ENCODE measurements at regions of chr16 and their contacts with region 1.

Region 1: DNA sequence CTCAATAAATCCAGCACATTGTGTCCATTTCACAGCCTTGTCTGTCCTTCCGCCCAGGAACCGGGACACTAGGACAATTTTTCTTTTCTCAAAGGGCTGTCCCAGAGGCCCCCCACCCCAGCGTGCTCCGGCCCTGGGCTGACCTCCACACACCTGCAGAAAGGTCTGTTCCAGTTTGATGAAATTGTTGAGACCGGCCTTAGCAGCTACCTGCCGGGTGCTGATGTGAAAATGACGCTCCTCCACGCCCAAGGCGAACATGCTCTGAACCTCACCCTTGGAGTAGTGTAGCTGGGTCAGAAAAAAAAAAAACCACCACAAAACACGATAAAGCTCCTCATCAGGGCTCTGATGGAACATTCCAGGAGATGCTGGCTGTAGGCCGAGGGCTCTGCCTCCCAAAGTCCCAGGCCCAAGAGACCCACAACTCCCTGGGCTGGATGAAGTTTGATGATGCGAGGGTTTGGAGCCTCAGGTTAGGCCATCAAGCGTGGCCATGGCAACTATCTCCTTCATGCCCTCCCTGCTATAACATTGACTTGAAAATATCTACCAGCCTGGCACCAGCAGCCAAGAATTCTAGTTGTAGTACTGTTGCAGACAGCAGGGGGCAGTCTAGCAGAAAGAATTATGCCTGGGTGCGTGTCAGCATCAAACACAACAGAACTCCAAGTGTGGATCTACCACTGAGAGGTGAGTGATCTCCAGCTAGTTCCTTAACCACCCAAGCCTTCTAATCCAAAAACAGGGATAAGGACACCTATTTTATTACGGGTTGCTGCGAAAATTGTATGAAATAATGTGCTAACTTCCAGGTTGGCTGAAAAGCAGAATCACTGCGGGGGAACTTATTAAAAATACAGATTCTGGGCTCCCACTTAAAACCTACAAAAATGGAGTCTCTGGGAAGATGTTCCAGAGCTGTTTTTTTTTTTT is 62.1 kb downstream of the RMI2 start:
- DNase-seq: peak; percentile 81
- H3K4me3 Mint-ChIP-seq: no peak overlapping the region
- H3K27ac Mint-ChIP-seq: no peak overlapping the region
- H3K4me1 Mint-ChIP-seq: no peaks in the 10 kb centered on the region
- H3K27me3 Mint-ChIP-seq: peaks cover 11% of the 10 kb centered on the region
- CTCF ChIP-seq: peak; percentile 72

Region 2: GRCh38 chr16:10964039-10964890 is 443.1 kb before region 1 on chr16:
- CTCF ChIA-PET with region 1: interaction called, 20 read pairs
- POLR2A ChIA-PET with region 1: no interaction called
- intact Hi-C with region 1: no loop called
- DNase-seq: peak; percentile 79
- H3K4me3 Mint-ChIP-seq: no peak overlapping the region
- H3K27ac Mint-ChIP-seq: no peak overlapping the region
- H3K4me1 Mint-ChIP-seq: peaks cover 18% of the 10 kb centered on the region
- H3K27me3 Mint-ChIP-seq: no peaks in the 10 kb centered on the region
- CTCF ChIP-seq: peak; percentile 93

Region 3: GRCh38 chr16:11370084-11370931 is 37.0 kb before region 1 on chr16:
- CTCF ChIA-PET with region 1: no interaction called
- POLR2A ChIA-PET with region 1: no interaction called
- intact Hi-C with region 1: no loop called
- DNase-seq: no peak
- H3K4me3 Mint-ChIP-seq: no peak overlapping the region
- H3K27ac Mint-ChIP-seq: no peak overlapping the region
- H3K4me1 Mint-ChIP-seq: peaks cover 10% of the 10 kb centered on the region
- H3K27me3 Mint-ChIP-seq: no peaks in the 10 kb centered on the region
- CTCF ChIP-seq: no peak

Region 4: DNA sequence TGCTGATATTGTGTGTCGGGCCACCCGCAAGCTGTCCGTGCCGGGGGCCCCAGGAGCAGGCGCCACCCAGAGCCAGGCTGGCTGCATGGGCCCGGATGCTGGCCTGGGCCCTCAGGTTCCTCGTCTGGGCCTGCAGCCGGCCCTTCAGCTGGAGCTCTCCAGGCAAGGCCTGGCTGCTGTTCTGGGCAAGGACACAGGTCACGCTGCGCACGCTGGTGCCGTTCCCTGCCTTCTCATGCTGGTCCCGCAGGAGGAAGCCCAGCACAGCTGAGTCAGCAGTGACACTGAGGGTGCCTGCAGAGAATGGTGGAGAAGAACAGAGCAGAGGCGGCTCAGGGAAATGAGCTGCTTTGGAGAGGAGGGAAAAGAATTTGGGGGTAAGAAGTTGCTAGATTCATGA is 17.8 kb after region 1 on chr16:
- CTCF ChIA-PET with region 1: interaction called, 14 read pairs
- POLR2A ChIA-PET with region 1: no interaction called
- intact Hi-C with region 1: no loop called
- DNase-seq: no peak
- H3K4me3 Mint-ChIP-seq: no peak overlapping the region
- H3K27ac Mint-ChIP-seq: no peak overlapping the region
- H3K4me1 Mint-ChIP-seq: no peaks in the 10 kb centered on the region
- H3K27me3 Mint-ChIP-seq: no peaks in the 10 kb centered on the region
- CTCF ChIP-seq: no peak

Region 5: DNA sequence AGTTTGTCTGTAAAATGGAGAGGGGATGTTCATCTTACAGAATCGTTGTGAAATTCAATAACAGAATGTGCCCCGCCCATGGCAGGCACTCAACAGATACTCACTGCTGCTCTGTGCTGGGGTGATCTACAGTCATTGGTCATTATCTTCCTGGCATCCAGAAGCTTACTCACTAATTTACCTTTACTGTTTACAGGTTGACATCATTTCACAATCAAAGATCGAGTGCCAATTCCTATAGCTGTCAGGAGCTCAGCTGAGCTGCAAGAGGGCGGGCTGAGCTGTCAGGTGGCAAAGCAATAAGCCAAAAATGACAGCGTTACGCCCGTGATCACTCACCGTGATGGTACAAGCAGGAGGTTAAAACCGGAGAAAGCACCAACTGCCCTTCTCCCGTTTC is 128.2 kb after region 1 on chr16:
- CTCF ChIA-PET with region 1: interaction called, 36 read pairs
- POLR2A ChIA-PET with region 1: interaction called, 6 read pairs
- intact Hi-C with region 1: loop called (anchors 5 kb)
- DNase-seq: peak; percentile 91
- H3K4me3 Mint-ChIP-seq: no peak overlapping the region
- H3K27ac Mint-ChIP-seq: no peak overlapping the region
- H3K4me1 Mint-ChIP-seq: peaks cover 17% of the 10 kb centered on the region
- H3K27me3 Mint-ChIP-seq: no peaks in the 10 kb centered on the region
- CTCF ChIP-seq: no peak

Region 6: DNA sequence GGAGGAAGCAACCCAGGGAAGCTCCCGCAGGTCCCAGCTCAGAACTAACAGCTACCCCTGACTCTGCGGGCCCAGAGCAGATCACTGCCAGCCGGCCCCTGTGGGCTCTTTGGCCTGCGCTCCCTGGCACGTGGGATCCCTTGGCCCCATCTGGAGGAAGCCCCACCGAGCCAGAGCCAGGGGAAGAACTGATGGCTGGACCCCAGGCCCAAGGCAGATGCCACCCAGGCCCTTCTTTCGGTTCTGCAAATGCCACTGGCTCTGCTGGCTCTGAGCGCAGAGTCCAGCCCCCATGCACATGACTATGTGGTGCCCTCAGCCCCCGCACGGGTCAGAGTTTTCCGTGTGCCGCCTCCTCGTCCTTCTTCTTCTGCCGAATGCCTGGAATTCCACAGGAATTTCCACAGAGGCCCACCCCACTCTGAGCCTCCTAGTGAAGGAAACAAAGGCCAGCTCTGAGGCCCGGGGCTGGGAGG is 225.2 kb after region 1 on chr16:
- CTCF ChIA-PET with region 1: interaction called, 4 read pairs
- POLR2A ChIA-PET with region 1: interaction called, 3 read pairs
- intact Hi-C with region 1: loop called (anchors 5 kb)
- DNase-seq: no peak
- H3K4me3 Mint-ChIP-seq: no peak overlapping the region
- H3K27ac Mint-ChIP-seq: no peak overlapping the region
- H3K4me1 Mint-ChIP-seq: peaks cover 20% of the 10 kb centered on the region
- H3K27me3 Mint-ChIP-seq: no peaks in the 10 kb centered on the region
- CTCF ChIP-seq: no peak

Region 7: DNA sequence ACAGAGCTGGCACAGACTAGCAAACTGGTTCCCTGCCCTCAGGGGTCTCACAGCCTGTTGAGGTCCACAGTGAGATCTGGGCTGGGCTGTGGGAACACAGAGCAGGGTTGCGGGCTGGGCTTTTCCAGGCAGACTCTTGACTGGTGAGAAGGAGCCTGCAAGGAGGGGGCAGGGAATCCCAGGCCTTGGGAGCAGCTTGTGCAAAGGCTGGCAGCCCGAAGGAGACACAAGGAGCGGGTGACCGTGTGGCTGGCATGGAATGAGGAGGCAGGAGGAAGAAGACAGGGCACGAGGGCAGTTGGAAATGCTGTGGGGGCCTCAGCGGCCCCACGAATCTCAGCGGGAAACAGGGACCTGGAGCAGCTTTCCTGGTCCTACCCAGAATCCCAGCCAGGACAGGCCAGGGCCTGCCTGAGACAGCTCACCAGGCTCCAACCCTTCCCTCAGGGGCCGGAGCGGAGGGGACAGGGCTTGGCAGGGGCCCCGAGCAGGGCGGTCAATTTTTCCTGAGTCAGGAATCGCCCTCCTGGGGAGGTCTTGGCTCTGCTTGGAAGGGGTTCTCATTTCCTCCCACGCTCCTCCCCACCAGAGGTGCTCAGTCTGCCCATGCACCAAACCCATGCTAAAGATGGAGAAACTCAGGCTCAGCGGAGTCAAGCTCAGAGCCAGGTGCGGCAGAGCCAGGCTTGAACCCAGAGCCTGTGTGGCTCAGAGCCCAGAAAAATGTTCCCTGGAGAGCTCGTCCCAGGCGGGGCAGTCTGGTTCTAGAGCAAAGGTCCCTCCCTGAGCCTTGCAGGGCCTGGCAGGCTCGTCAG is 251.8 kb after region 1 on chr16:
- CTCF ChIA-PET with region 1: interaction called, 18 read pairs
- POLR2A ChIA-PET with region 1: interaction called, 3 read pairs
- intact Hi-C with region 1: no loop called
- DNase-seq: peak; percentile 97
- H3K4me3 Mint-ChIP-seq: peak overlapping the region; percentile 37
- H3K27ac Mint-ChIP-seq: peak overlapping the region; percentile 94
- H3K4me1 Mint-ChIP-seq: peaks cover 18% of the 10 kb centered on the region
- H3K27me3 Mint-ChIP-seq: no peaks in the 10 kb centered on the region
- CTCF ChIP-seq: no peak

Region 8: GRCh38 chr16:11715246-11715947 is 308.1 kb after region 1 on chr16:
- CTCF ChIA-PET with region 1: interaction called, 79 read pairs
- POLR2A ChIA-PET with region 1: interaction called, 3 read pairs
- intact Hi-C with region 1: no loop called
- DNase-seq: no peak
- H3K4me3 Mint-ChIP-seq: no peak overlapping the region
- H3K27ac Mint-ChIP-seq: no peak overlapping the region
- H3K4me1 Mint-ChIP-seq: no peaks in the 10 kb centered on the region
- H3K27me3 Mint-ChIP-seq: no peaks in the 10 kb centered on the region
- CTCF ChIP-seq: no peak

Region 9: GRCh38 chr16:12362482-12363458 is 955.5 kb after region 1 on chr16:
- CTCF ChIA-PET with region 1: no interaction called
- POLR2A ChIA-PET with region 1: no interaction called
- intact Hi-C with region 1: no loop called
- DNase-seq: no peak
- H3K4me3 Mint-ChIP-seq: no peak overlapping the region
- H3K27ac Mint-ChIP-seq: no peak overlapping the region
- H3K4me1 Mint-ChIP-seq: no peaks in the 10 kb centered on the region
- H3K27me3 Mint-ChIP-seq: no peaks in the 10 kb centered on the region
- CTCF ChIP-seq: no peak

Measured in MCF 10A (cell line).